ENCODE measurements at regions of chr9 and their contacts with region 1.

Region 1: GRCh38 chr9:109063760-109064159 is 50.5 kb upstream of the CTNNAL1 start:
- DNase-seq: no peak
- H3K4me3 ChIP-seq: no peak overlapping the region
- H3K27ac ChIP-seq: no peak overlapping the region
- H3K4me1 ChIP-seq: no peaks in the 10 kb centered on the region
- H3K27me3 ChIP-seq: no peaks in the 10 kb centered on the region
- CTCF ChIP-seq: no peak
- POLR2A ChIP-seq: no peak

Region 2: GRCh38 chr9:108565651-108566378 is 497.9 kb before region 1 on chr9:
- intact Hi-C with region 1: no loop called
- DNase-seq: peak; percentile 69
- H3K4me3 ChIP-seq: no peak overlapping the region
- H3K27ac ChIP-seq: no peak overlapping the region
- H3K4me1 ChIP-seq: no peaks in the 10 kb centered on the region
- H3K27me3 ChIP-seq: no peaks in the 10 kb centered on the region
- CTCF ChIP-seq: peak; percentile 76 to 86 (median 86)
- POLR2A ChIP-seq: no peak

Region 3: GRCh38 chr9:108913391-108913790 is 150.4 kb before region 1 on chr9:
- intact Hi-C with region 1: no loop called
- DNase-seq: no peak
- H3K4me3 ChIP-seq: no peak overlapping the region
- H3K27ac ChIP-seq: no peak overlapping the region
- H3K4me1 ChIP-seq: no peaks in the 10 kb centered on the region
- H3K27me3 ChIP-seq: no peaks in the 10 kb centered on the region
- CTCF ChIP-seq: no peak
- POLR2A ChIP-seq: no peak

Region 4: GRCh38 chr9:109499631-109500410 is 436.1 kb after region 1 on chr9:
- intact Hi-C with region 1: loop called (anchors 10 kb)
- DNase-seq: peak; percentile 62
- H3K4me3 ChIP-seq: peak overlapping the region; percentile 23 to 32
- H3K27ac ChIP-seq: no peak overlapping the region
- H3K4me1 ChIP-seq: no peaks in the 10 kb centered on the region
- H3K27me3 ChIP-seq: no peaks in the 10 kb centered on the region
- CTCF ChIP-seq: no peak
- POLR2A ChIP-seq: no peak

Measured in testis (tissue), 5 donors.